ENCODE measurements at regions of chrX and their contacts with region 1.

Region 1: GRCh38 chrX:72110051-72110877 is 21.5 kb downstream of the RTL5 start:
- DNase-seq: no peak
- H3K4me3 ChIP-seq: no peak overlapping the region
- H3K27ac ChIP-seq: no peak overlapping the region
- H3K4me1 ChIP-seq: peaks cover 0 to 19% (median 13%) of the 10 kb centered on the region in 4 donors
- H3K27me3 ChIP-seq: no peaks in the 10 kb centered on the region
- CTCF ChIP-seq: no peak
- EP300 ChIP-seq: no peak
- POLR2A ChIP-seq: no peak

Region 2: DNA sequence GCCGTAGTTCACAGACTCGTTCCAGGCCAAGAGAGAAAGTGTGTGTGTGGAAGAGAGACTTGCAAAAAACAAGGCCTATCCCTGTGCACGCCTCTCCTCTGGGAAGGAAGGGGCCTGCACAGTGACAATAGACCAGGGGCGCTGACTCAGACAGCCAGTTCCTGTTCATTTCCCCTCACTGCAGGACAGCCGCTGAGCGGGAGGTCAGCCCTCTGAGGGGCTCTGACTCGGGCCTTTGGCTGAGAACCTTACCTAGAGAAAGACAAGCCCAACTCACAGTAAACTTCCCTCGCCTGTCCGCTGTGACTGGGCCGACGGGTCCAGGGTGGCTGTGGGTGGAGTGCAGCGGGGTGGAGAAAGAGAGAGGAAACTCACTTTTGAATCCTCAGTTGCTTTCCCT is 30.7 kb before region 1 on chrX:
- intact Hi-C with region 1: loop called (anchors 5 kb)
- DNase-seq: no peak
- H3K4me3 ChIP-seq: no peak overlapping the region
- H3K27ac ChIP-seq: peak overlapping the region in 3 of 4 donors; percentile 17 to 58 (median 27)
- H3K4me1 ChIP-seq: peaks cover 0 to 27% (median 4%) of the 10 kb centered on the region in 4 donors
- H3K27me3 ChIP-seq: no peaks in the 10 kb centered on the region
- CTCF ChIP-seq: no peak
- EP300 ChIP-seq: no peak
- POLR2A ChIP-seq: no peak

Region 3: GRCh38 chrX:72230290-72230689 is 120.0 kb after region 1 on chrX:
- intact Hi-C with region 1: no loop called
- DNase-seq: no peak
- H3K4me3 ChIP-seq: no peak overlapping the region
- H3K27ac ChIP-seq: no peak overlapping the region
- H3K4me1 ChIP-seq: no peaks in the 10 kb centered on the region
- H3K27me3 ChIP-seq: no peaks in the 10 kb centered on the region
- CTCF ChIP-seq: no peak
- EP300 ChIP-seq: no peak
- POLR2A ChIP-seq: no peak

Measured in sigmoid colon (tissue), 7 donors.